Activated CD4-positive, alpha-beta T cell treated with anti-CD3 and anti-CD28 coated beads for 36 hours (primary cell): ENCODE measurements at regions of chr7 and their contacts with region 1.

Region 1: GRCh38 chr7:130961128-130961601 is 227.2 kb upstream of the KLF14 start:
- DNase-seq: peak; percentile 88
- ATAC-seq: peak; percentile 86
- H3K4me3 Mint-ChIP-seq: no peak overlapping the region
- H3K27ac Mint-ChIP-seq: peak overlapping the region; percentile 100
- H3K4me1 Mint-ChIP-seq: peaks cover 40% of the 10 kb centered on the region
- H3K27me3 Mint-ChIP-seq: no peaks in the 10 kb centered on the region

Region 2: GRCh38 chr7:130649004-130649790 is 312.0 kb before region 1 on chr7:
- CTCF ChIA-PET with region 1: no interaction called
- POLR2A ChIA-PET with region 1: no interaction called
- intact Hi-C with region 1: loop called in 1 of 2 experiments (anchors 2 kb)
- DNase-seq: peak; percentile 42
- ATAC-seq: peak; percentile 95
- H3K4me3 Mint-ChIP-seq: peak overlapping the region; percentile 32
- H3K27ac Mint-ChIP-seq: peak overlapping the region; percentile 87
- H3K4me1 Mint-ChIP-seq: peaks cover 33% of the 10 kb centered on the region
- H3K27me3 Mint-ChIP-seq: no peaks in the 10 kb centered on the region

Region 3: GRCh38 chr7:130793855-130794618 is 167.1 kb before region 1 on chr7:
- CTCF ChIA-PET with region 1: no interaction called
- POLR2A ChIA-PET with region 1: no interaction called
- intact Hi-C with region 1: no loop called
- DNase-seq: no peak
- ATAC-seq: no peak
- H3K4me3 Mint-ChIP-seq: no peak overlapping the region
- H3K27ac Mint-ChIP-seq: no peak overlapping the region
- H3K4me1 Mint-ChIP-seq: no peaks in the 10 kb centered on the region
- H3K27me3 Mint-ChIP-seq: peaks cover 4% of the 10 kb centered on the region

Region 4: GRCh38 chr7:130941322-130942210 is 19.6 kb before region 1 on chr7:
- CTCF ChIA-PET with region 1: interaction called, 13 read pairs
- POLR2A ChIA-PET with region 1: interaction called, 29 read pairs
- intact Hi-C with region 1: no loop called
- DNase-seq: peak; percentile 54
- ATAC-seq: peak; percentile 7
- H3K4me3 Mint-ChIP-seq: peak overlapping the region; percentile 67
- H3K27ac Mint-ChIP-seq: peak overlapping the region; percentile 88
- H3K4me1 Mint-ChIP-seq: peaks cover 90% of the 10 kb centered on the region
- H3K27me3 Mint-ChIP-seq: no peaks in the 10 kb centered on the region

Region 5: GRCh38 chr7:130996841-130997231 is 35.7 kb after region 1 on chr7:
- CTCF ChIA-PET with region 1: no interaction called
- POLR2A ChIA-PET with region 1: interaction called, 13 read pairs
- intact Hi-C with region 1: no loop called
- DNase-seq: peak; percentile 67
- ATAC-seq: peak; percentile 66
- H3K4me3 Mint-ChIP-seq: peak overlapping the region; percentile 64
- H3K27ac Mint-ChIP-seq: peak overlapping the region; percentile 92
- H3K4me1 Mint-ChIP-seq: peaks cover 86% of the 10 kb centered on the region
- H3K27me3 Mint-ChIP-seq: no peaks in the 10 kb centered on the region

Region 6: DNA sequence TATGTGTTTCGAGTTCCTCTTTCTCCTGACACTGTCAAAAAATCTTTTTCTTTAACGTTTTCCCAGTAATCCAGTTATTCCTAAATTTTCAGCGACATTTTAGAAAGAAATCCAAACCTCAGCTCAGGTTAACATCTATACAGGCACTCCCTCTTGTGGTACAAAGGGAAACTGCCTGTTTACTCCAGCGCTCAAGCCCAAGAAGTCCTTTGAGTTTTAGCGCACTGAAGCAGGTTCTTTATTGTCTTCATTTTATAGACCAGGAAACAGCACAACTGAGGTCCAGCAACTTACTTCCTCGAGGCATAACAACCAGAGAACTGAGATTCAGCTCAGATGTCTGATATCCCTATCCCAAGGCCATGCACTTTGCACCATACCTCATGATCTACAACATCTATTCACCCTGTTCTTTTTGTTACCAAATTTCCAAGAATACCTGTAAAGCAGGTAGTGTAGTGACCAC is 79.3 kb after region 1 on chr7:
- CTCF ChIA-PET with region 1: interaction called, 46 read pairs
- POLR2A ChIA-PET with region 1: interaction called, 15 read pairs
- intact Hi-C with region 1: no loop called
- DNase-seq: peak; percentile 63
- ATAC-seq: peak; percentile 68
- H3K4me3 Mint-ChIP-seq: peak overlapping the region; percentile 40
- H3K27ac Mint-ChIP-seq: peak overlapping the region; percentile 82
- H3K4me1 Mint-ChIP-seq: peaks cover 59% of the 10 kb centered on the region
- H3K27me3 Mint-ChIP-seq: no peaks in the 10 kb centered on the region